ENCODE measurements at regions of chr1 and their contacts with region 1.

Region 1: GRCh38 chr1:48202030-48202752 is 20.3 kb upstream of the SLC5A9 start:
- DNase-seq: peak; percentile 73
- H3K4me3 Mint-ChIP-seq: no peak overlapping the region
- H3K27ac Mint-ChIP-seq: no peak overlapping the region
- H3K4me1 Mint-ChIP-seq: no peaks in the 10 kb centered on the region
- H3K27me3 Mint-ChIP-seq: peaks cover 5% of the 10 kb centered on the region

Region 2: DNA sequence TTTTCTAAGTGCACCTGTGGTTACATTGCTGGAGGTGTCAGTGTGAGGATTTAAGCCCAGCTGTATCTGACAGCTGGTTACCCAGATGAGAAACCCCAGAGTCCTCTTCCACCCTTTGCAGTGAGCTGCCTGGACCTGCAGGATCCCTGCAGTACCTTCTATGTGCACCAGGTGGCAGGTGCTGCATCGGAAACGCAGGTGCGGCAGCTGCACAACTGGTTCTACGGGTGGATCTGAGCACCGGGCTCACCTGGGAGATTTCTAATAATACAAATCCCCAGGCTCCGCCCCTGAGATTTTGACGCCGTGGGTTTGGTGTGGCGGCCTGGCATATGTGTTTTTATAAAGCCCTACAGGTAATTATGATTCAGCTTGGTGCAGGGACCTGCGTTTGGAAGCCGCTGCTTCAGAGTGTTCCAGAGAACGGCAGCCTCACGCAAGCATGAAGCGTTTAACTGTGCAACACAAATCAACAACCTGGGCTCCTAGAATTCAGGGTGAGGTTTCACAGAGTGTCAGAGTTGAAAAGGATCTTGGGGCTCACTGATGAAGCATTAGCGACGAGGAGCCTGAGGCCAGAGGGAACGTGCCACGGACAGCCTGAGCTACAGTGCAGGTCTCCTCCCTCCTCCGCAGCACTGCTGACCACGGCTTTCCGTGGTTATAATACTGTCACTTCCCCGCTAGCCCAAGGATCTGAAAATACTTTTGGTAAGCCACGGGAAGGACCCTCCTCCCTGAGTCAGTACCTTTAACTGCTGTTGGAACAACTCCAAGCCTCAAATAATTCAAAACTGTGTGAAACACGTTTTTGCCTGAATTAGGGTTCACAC is 108.3 kb before region 1 on chr1:
- CTCF ChIA-PET with region 1: interaction called, 24 read pairs
- DNase-seq: peak; percentile 85
- H3K4me3 Mint-ChIP-seq: no peak overlapping the region
- H3K27ac Mint-ChIP-seq: no peak overlapping the region
- H3K4me1 Mint-ChIP-seq: peaks cover 7% of the 10 kb centered on the region
- H3K27me3 Mint-ChIP-seq: peaks cover 28% of the 10 kb centered on the region

Region 3: DNA sequence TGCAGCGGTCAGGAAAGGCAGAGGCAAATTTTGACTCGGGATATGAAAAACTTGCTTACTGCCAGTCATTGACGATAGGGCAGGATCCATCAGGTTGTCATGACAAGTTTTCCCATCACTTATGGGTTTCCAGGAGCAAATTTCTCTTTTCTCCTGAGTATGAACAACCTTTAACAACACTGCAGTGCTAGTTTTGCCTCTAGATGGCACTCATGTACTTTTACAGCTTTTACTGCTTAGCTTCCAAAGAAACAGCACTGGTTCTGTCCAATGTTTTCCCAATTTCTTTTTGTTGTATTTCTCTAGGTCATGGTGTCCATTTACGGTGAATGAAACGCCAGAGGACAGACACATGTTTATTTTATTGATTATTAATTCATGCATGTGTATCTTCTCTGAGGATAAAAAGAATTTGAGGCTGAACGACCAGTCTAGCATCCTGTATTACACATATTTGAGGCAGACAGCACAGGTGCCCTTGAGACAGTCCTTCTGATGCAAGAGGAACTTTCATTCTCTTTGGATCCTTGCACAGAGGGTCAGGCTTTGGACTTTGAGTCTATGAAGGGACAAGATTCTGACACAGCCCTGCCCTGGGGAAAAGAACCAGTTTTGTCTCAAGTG is 92.7 kb before region 1 on chr1:
- CTCF ChIA-PET with region 1: interaction called, 27 read pairs
- DNase-seq: no peak
- H3K4me3 Mint-ChIP-seq: no peak overlapping the region
- H3K27ac Mint-ChIP-seq: no peak overlapping the region
- H3K4me1 Mint-ChIP-seq: no peaks in the 10 kb centered on the region
- H3K27me3 Mint-ChIP-seq: no peaks in the 10 kb centered on the region

Region 4: DNA sequence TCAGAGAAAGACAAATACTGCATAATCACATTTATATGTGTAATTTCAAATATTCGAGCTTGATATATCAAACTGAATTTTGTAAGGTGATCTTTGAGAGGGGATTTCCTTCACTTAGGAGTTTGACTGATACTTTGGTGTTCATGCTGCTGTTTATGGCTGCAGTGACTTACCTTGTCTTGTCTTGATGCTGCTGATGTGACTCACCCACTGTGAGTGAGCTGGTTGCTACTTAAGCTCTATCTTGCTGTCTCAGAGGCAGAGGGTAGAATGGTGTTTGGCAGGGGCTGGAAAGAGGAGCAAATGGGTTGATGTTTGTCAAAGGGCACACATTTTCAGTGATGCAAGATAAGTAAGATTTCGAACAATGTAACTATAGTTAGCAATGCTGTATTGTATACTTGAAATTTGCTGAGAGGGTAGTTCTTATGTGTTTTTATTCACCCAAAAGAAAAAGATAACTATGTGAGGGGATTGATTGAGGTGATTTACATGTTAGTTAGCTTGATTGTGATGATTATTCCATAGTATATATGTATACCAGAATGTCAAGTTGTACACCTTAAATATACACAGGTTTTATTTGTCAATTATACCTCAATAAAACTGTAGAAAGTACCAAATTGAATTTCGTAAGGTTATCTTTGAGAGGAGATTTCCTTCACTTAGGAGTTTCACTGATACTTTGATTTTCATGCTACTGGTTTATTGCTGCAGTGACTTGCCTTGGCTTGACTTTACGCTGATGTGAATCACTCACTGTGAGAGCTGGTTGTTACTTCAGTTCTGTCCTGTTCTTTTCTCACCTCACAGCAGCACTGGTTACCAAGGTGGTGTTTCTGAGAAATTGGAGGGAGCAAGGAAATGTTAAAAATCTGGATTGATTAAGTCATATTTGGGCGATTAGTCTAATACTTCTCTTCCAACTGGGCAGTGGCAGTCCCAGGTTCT is 74.2 kb before region 1 on chr1:
- CTCF ChIA-PET with region 1: no interaction called
- DNase-seq: no peak
- H3K4me3 Mint-ChIP-seq: no peak overlapping the region
- H3K27ac Mint-ChIP-seq: no peak overlapping the region
- H3K4me1 Mint-ChIP-seq: no peaks in the 10 kb centered on the region
- H3K27me3 Mint-ChIP-seq: no peaks in the 10 kb centered on the region

Region 5: GRCh38 chr1:48236716-48237470 is 34.7 kb after region 1 on chr1:
- CTCF ChIA-PET with region 1: interaction called, 11 read pairs
- DNase-seq: no peak
- H3K4me3 Mint-ChIP-seq: no peak overlapping the region
- H3K27ac Mint-ChIP-seq: no peak overlapping the region
- H3K4me1 Mint-ChIP-seq: no peaks in the 10 kb centered on the region
- H3K27me3 Mint-ChIP-seq: peaks cover 14% of the 10 kb centered on the region